Caco-2 (cell line): ENCODE measurements at regions of chr9 and their contacts with region 1.

Region 1: DNA sequence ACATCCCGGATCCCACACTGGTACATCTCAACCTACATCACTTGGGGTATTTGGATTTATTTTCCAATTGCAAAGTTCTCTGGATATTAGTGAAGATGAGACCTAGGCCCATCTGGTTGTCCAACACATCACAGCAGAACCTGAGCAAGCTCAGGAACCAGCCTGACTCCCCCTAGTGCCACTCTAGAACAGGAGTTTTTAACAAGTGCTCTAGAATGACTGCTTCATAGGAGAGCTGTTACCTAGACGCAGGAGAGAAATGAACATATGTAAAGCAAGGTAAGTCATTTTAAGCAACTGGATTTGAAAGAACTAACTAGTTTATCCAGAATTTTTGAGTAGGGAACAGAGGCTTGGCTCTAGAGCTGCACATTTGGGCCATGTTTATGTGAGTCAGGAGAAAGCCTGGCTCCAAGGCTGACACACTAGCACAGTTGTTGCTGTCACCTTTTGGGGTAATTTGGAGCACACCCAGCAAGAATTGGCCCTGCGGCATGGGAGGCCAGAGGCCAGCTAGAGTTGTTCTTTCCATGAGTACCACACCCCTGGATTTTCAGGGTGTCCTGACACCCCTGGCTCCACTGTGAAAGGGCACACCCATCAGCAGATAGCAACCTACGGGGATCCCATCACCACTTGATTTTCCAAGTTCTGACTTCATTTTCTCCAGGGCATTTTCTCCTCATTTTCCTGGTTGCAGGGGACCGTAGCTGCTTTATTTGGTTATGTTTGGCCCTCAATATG is 110.9 kb upstream of the LPAR1 start:
- DNase-seq: peak in 1 of 2 experiments; percentile 8
- H3K4me3 ChIP-seq: no peak overlapping the region
- H3K4me3 Mint-ChIP-seq: no peak overlapping the region
- H3K27ac Mint-ChIP-seq: no peak overlapping the region
- H3K4me1 ChIP-seq: no peaks in the 10 kb centered on the region
- H3K4me1 Mint-ChIP-seq: no peaks in the 10 kb centered on the region
- H3K27me3 ChIP-seq: no peaks in the 10 kb centered on the region
- H3K27me3 Mint-ChIP-seq: peaks cover 6% of the 10 kb centered on the region
- CTCF ChIP-seq: peak in 1 of 2 experiments; percentile 28

Region 2: GRCh38 chr9:111195766-111196165 is 46.6 kb after region 1 on chr9:
- CTCF ChIA-PET with region 1: no interaction called
- POLR2A ChIA-PET with region 1: no interaction called
- intact Hi-C with region 1: no loop called
- DNase-seq: no peak
- H3K4me3 ChIP-seq: no peak overlapping the region
- H3K4me3 Mint-ChIP-seq: no peak overlapping the region
- H3K27ac Mint-ChIP-seq: no peak overlapping the region
- H3K4me1 ChIP-seq: no peaks in the 10 kb centered on the region
- H3K4me1 Mint-ChIP-seq: no peaks in the 10 kb centered on the region
- H3K27me3 ChIP-seq: no peaks in the 10 kb centered on the region
- H3K27me3 Mint-ChIP-seq: peaks cover 19% of the 10 kb centered on the region
- CTCF ChIP-seq: no peak

Region 3: DNA sequence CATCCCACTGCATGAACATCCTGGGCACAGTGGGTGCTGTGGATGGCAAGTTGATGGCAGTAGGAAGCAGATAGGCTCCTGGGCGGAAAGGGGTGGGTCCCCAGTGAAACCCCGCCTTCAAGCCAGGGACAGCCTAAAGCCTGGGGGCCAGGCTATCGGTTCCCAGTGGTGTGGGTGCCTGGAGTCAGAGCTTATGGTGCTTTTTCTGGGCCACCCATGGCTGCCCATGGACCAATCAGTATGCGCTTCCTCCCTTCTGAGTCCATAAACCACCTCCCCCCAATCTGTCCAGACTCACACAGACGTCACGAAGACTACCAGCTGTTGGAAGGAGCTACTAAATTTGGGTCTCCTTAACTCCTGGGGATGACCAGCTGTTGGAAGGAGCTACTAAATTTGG is 352.5 kb after region 1 on chr9:
- CTCF ChIA-PET with region 1: no interaction called
- POLR2A ChIA-PET with region 1: interaction called, 12 read pairs
- intact Hi-C with region 1: no loop called
- DNase-seq: no peak
- H3K4me3 ChIP-seq: no peak overlapping the region
- H3K4me3 Mint-ChIP-seq: no peak overlapping the region
- H3K27ac Mint-ChIP-seq: no peak overlapping the region
- H3K4me1 ChIP-seq: no peaks in the 10 kb centered on the region
- H3K4me1 Mint-ChIP-seq: no peaks in the 10 kb centered on the region
- H3K27me3 ChIP-seq: no peaks in the 10 kb centered on the region
- H3K27me3 Mint-ChIP-seq: no peaks in the 10 kb centered on the region
- CTCF ChIP-seq: no peak